ENCODE measurements at regions of chr17 and their contacts with region 1.

Region 1: GRCh38 chr17:32997753-32998632 is 6.3 kb downstream of the SPACA3 start:
- DNase-seq: peak; percentile 79
- H3K4me3 Mint-ChIP-seq: peak overlapping the region; percentile 61
- H3K27ac Mint-ChIP-seq: no peak overlapping the region
- H3K4me1 Mint-ChIP-seq: peaks cover 7% of the 10 kb centered on the region
- H3K27me3 Mint-ChIP-seq: no peaks in the 10 kb centered on the region
- CTCF ChIP-seq: peak; percentile 87

Region 2: DNA sequence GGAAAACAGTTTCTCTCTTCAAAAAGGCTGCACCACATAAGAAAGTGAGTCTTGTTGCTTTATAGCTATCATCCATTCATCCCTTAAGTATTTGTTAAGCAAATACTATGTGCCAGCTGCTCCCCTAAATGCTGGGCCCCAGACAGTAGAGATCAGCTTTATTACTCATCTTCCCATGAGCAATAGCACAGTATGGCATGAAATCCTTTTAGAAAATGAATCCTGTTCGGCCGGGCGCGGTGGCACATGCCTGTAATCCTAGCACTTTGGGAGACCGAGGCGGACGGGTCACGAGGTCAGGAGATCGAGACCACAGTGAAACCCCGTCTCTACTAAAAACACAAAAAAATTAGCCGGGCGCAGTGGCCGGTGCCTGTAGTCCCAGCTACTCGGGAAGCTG is 220.6 kb before region 1 on chr17:
- CTCF ChIA-PET with region 1: interaction called, 25 read pairs
- POLR2A ChIA-PET with region 1: no interaction called
- intact Hi-C with region 1: no loop called
- DNase-seq: no peak
- H3K4me3 Mint-ChIP-seq: no peak overlapping the region
- H3K27ac Mint-ChIP-seq: no peak overlapping the region
- H3K4me1 Mint-ChIP-seq: no peaks in the 10 kb centered on the region
- H3K27me3 Mint-ChIP-seq: no peaks in the 10 kb centered on the region
- CTCF ChIP-seq: no peak

Region 3: DNA sequence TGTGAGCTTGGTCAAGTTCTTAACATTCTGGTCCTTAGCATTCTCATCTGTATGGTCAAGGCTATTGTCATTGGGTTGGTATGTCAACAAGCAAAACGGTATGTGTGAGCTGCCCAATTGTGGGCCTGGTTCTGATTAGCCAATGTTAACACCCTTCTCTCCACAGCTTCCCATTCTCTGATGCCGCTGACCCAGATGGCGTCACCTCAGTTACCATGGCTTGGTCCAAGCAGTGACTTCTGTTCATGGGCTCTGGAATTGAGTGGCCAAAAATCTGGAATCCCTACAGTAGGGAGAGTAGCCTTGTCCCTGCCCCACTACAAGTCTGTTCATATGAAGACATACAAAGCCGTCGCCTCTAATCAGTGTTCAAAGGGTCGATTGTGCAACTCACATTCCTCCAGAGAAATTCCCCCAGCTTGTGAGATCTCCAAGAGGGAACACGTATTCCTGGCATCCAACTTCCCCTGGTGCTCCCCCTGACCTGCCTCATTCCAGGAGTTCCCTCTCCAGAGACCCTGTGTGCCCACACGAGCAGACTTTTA is 54.3 kb before region 1 on chr17:
- CTCF ChIA-PET with region 1: interaction called, 10 read pairs
- POLR2A ChIA-PET with region 1: no interaction called
- intact Hi-C with region 1: no loop called
- DNase-seq: peak; percentile 32
- H3K4me3 Mint-ChIP-seq: no peak overlapping the region
- H3K27ac Mint-ChIP-seq: no peak overlapping the region
- H3K4me1 Mint-ChIP-seq: peaks cover 13% of the 10 kb centered on the region
- H3K27me3 Mint-ChIP-seq: peaks cover 21% of the 10 kb centered on the region
- CTCF ChIP-seq: no peak

Region 4: DNA sequence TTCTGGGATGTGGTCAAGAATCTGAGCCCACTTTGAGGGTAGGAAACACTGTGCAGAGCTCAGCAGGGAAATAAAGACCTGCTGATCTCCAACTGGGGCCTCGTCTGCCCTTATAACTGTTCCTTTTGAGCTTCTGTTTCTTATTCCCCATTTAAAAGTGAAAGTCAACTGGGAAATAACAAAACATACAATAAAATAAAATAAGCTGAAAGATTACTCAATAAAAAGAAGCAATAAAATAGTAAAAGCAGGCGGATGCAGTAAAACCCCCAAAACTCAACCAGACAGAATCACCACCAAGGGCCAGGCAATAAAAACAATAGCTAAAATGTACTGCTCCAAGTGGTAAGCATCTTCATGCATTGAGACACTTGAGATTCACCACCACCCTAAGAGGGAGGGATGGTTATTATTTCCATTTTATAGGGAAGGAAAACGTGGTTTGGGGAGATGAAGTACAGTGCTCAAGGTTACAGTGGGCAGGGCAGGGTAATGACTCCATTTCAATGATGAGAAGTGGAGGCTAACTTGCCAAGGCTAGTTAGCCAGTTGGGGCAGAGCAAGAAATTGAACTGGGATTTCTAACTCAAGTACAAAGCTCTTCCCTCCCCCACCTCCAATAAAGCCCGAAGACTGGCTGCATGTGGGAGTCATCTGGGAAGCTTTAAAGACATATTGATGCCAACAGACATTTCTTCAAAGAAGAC is 12.8 kb before region 1 on chr17:
- CTCF ChIA-PET with region 1: interaction called, 43 read pairs
- POLR2A ChIA-PET with region 1: no interaction called
- intact Hi-C with region 1: no loop called
- DNase-seq: no peak
- H3K4me3 Mint-ChIP-seq: no peak overlapping the region
- H3K27ac Mint-ChIP-seq: no peak overlapping the region
- H3K4me1 Mint-ChIP-seq: no peaks in the 10 kb centered on the region
- H3K27me3 Mint-ChIP-seq: no peaks in the 10 kb centered on the region
- CTCF ChIP-seq: no peak

Region 5: GRCh38 chr17:33012522-33013033 is 14.6 kb after region 1 on chr17:
- CTCF ChIA-PET with region 1: interaction called, 22 read pairs
- POLR2A ChIA-PET with region 1: no interaction called
- intact Hi-C with region 1: no loop called
- DNase-seq: peak; percentile 92
- H3K4me3 Mint-ChIP-seq: no peak overlapping the region
- H3K27ac Mint-ChIP-seq: peak overlapping the region; percentile 90
- H3K4me1 Mint-ChIP-seq: peaks cover 27% of the 10 kb centered on the region
- H3K27me3 Mint-ChIP-seq: no peaks in the 10 kb centered on the region
- CTCF ChIP-seq: no peak

Region 6: GRCh38 chr17:33072421-33073196 is 74.6 kb after region 1 on chr17:
- CTCF ChIA-PET with region 1: no interaction called
- POLR2A ChIA-PET with region 1: no interaction called
- intact Hi-C with region 1: no loop called
- DNase-seq: no peak
- H3K4me3 Mint-ChIP-seq: no peak overlapping the region
- H3K27ac Mint-ChIP-seq: no peak overlapping the region
- H3K4me1 Mint-ChIP-seq: no peaks in the 10 kb centered on the region
- H3K27me3 Mint-ChIP-seq: peaks cover 10% of the 10 kb centered on the region
- CTCF ChIP-seq: no peak

Region 7: GRCh38 chr17:33091271-33091670 is 93.3 kb after region 1 on chr17:
- CTCF ChIA-PET with region 1: no interaction called
- POLR2A ChIA-PET with region 1: no interaction called
- intact Hi-C with region 1: no loop called
- DNase-seq: no peak
- H3K4me3 Mint-ChIP-seq: no peak overlapping the region
- H3K27ac Mint-ChIP-seq: peak overlapping the region; percentile 32
- H3K4me1 Mint-ChIP-seq: peaks cover 8% of the 10 kb centered on the region
- H3K27me3 Mint-ChIP-seq: peaks cover 30% of the 10 kb centered on the region
- CTCF ChIP-seq: no peak

Measured in MCF 10A (cell line).